A549 (cell line): ENCODE measurements at regions of chr15 and their contacts with region 1.

Region 1: DNA sequence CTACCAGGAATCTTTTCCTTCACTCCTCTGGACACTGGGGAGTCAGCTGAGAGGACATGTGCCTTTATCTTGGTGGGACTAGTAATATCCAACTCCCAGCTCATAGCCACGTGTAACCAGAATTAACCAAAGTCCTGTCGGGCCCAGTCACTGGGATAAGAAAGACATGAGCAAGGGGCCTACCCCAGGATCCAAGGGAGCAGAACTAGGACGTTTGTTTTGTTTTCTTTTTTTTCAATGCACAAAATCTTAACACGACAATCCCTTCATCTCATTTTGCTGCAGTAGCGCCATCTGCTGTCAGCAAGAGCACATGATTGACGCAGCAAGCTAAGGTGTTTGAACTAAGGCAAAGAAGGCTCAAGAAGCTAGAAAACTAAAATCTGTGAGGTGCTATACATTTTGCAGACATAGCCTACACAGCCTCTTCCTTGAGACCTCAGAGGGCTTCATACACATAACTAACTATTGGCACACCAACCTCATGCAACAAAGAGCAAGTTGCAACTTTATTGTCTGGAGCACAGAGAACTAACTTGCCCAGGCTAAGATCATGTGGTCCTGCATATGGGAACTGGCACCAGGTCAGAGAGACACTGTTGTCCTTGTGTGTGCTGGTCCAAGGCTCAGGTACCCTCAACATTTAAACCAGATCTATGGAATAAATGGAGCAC is 43.6 kb downstream of the RLBP1 start:
- DNase-seq: peak; percentile 70 to 82
- ATAC-seq: peak; percentile 83 to 89
- H3K4me3 ChIP-seq: no peak overlapping the region
- H3K27ac ChIP-seq: peak overlapping the region; percentile 10 to 14; a peak in 1 of 6 replicates
- H3K4me1 ChIP-seq: no peaks in the 10 kb centered on the region
- CTCF ChIP-seq: peak; percentile 98
- EP300 ChIP-seq: no peak
- POLR2A ChIP-seq: no peak
- RAD21 ChIP-seq: peak; percentile 94 to 96

Region 2: GRCh38 chr15:88904624-88905327 is 273.0 kb before region 1 on chr15:
- CTCF ChIA-PET with region 1: interaction called, 69 read pairs
- POLR2A ChIA-PET with region 1: no interaction called
- DNase-seq: peak; percentile 82 to 89
- ATAC-seq: peak; percentile 64 to 88
- H3K4me3 ChIP-seq: no peak overlapping the region
- H3K27ac ChIP-seq: peak overlapping the region; percentile 49 to 71
- H3K4me1 ChIP-seq: peaks cover 33% of the 10 kb centered on the region
- CTCF ChIP-seq: peak; percentile 99
- EP300 ChIP-seq: no peak
- POLR2A ChIP-seq: no peak
- RAD21 ChIP-seq: peak; percentile 97

Region 3: GRCh38 chr15:89041507-89041906 is 136.3 kb before region 1 on chr15:
- CTCF ChIA-PET with region 1: interaction called, 224 read pairs
- POLR2A ChIA-PET with region 1: no interaction called
- DNase-seq: no peak
- ATAC-seq: peak; percentile 39 to 53; a peak in 3 of 6 replicates
- H3K4me3 ChIP-seq: no peak overlapping the region
- H3K27ac ChIP-seq: no peak overlapping the region
- H3K4me1 ChIP-seq: no peaks in the 10 kb centered on the region
- CTCF ChIP-seq: no peak
- EP300 ChIP-seq: no peak
- POLR2A ChIP-seq: no peak
- RAD21 ChIP-seq: no peak

Region 4: GRCh38 chr15:89101302-89102191 is 76.2 kb before region 1 on chr15:
- CTCF ChIA-PET with region 1: interaction called, 34 read pairs
- POLR2A ChIA-PET with region 1: no interaction called
- DNase-seq: peak; percentile 97 to 98
- ATAC-seq: peak; percentile 92 to 93
- H3K4me3 ChIP-seq: no peak overlapping the region; the same call in 2 of the 3 replicates
- H3K27ac ChIP-seq: peak overlapping the region; percentile 85 to 88
- H3K4me1 ChIP-seq: peaks cover 99% of the 10 kb centered on the region
- CTCF ChIP-seq: no peak
- EP300 ChIP-seq: peak; percentile 69 to 71; a peak in 2 of 5 replicates
- POLR2A ChIP-seq: no peak
- RAD21 ChIP-seq: peak; percentile 8 to 24; a peak in 1 of 5 replicates

Region 5: GRCh38 chr15:89129123-89129815 is 48.5 kb before region 1 on chr15:
- CTCF ChIA-PET with region 1: interaction called, 187 read pairs
- POLR2A ChIA-PET with region 1: no interaction called
- DNase-seq: peak; percentile 63 to 68
- ATAC-seq: peak; percentile 60 to 79; a peak in 3 of 6 replicates
- H3K4me3 ChIP-seq: no peak overlapping the region
- H3K27ac ChIP-seq: peak overlapping the region; percentile 69 to 74
- H3K4me1 ChIP-seq: peaks cover 57% of the 10 kb centered on the region
- CTCF ChIP-seq: peak; percentile 95
- EP300 ChIP-seq: no peak
- POLR2A ChIP-seq: no peak
- RAD21 ChIP-seq: peak; percentile 84 to 86

Region 6: DNA sequence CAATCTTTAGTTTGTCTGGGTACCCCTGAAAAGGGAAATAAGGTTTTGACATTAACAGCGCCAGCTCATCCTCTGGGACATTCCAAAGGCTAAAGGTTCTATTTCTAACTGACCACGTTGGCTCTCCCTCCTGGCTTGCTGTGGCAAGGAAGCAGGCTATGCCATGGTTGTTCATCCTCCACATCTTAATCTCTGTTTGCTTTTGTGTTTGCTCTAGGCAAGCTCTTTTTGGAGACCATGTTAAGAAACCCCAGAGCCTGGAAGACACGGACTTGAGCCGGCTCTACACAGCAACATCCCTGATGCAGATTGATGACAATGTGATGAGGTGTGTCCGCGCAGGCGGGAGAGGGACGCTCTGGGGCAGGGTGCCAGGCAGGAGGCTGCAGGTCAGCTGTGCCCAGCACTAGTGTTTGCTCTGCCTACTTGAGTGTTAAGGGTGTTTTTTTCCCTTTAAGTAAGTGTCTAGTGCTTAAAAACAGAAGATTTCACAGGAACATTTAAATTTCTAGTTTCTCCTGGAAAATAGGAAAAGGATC is 10.3 kb after region 1 on chr15:
- CTCF ChIA-PET with region 1: interaction called, 71 read pairs
- POLR2A ChIA-PET with region 1: no interaction called
- DNase-seq: no peak
- ATAC-seq: no peak
- H3K4me3 ChIP-seq: no peak overlapping the region
- H3K27ac ChIP-seq: no peak overlapping the region
- H3K4me1 ChIP-seq: no peaks in the 10 kb centered on the region
- CTCF ChIP-seq: no peak
- EP300 ChIP-seq: no peak
- POLR2A ChIP-seq: no peak
- RAD21 ChIP-seq: no peak